Right cardiac atrium (tissue), 5 donors: ENCODE measurements at regions of chr2 and their contacts with region 1.

Region 1: GRCh38 chr2:46812361-46813024 is 103.1 kb downstream of the MCFD2 start:
- DNase-seq: peak; percentile 82 to 93 (median 91)
- ATAC-seq: peak; percentile 45 to 55
- H3K4me3 ChIP-seq: no peak overlapping the region
- H3K27ac ChIP-seq: peak overlapping the region; percentile 81
- H3K4me1 ChIP-seq: peaks cover 41% of the 10 kb centered on the region
- H3K27me3 ChIP-seq: no peaks in the 10 kb centered on the region

Region 2: DNA sequence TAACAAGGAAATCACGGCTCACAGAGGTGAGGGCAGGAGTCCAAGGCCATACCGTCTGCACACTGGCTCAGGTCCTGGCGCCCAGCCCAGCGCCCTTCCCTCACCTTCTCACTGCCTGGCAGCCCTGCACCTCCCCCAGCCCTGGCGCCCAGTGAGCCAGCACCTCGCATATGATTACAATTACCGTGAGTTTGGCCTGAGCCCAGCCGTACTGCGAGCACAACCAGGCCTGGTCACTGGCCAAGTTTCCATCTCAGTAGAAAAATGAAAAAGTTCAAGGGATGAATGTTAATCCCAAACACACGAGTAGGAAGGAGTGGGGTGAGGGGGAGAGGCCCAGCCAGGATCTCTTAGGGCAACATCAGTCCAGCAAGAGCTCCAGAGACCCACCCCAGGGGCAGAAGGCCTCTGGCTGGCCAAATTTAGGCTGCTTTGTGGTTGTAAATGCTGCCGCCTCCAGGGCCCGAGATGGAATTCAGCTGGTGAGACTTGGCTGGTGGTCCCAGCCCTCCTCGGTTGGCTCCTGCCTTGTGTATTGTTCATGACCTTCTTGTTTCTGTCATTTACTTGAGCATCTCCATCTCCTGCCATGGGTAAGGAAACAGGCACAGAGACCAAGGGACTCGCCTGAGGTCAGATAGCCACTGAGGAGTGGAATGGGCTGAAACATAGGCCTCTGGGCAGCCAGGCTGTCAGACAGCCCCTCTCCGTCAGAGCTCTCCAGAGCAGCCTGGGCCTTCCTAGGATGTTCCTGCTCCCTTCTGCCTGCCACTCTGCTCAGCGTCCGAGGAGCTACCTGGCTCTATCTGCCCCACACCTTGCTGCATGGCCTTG is 35.0 kb after region 1 on chr2:
- intact Hi-C with region 1: loop called in 1 of 4 experiments (anchors 5 kb)
- DNase-seq: peak; percentile 93 to 96 (median 96)
- ATAC-seq: peak; percentile 81 to 82
- H3K4me3 ChIP-seq: no peak overlapping the region
- H3K27ac ChIP-seq: peak overlapping the region; percentile 97
- H3K4me1 ChIP-seq: peaks cover 44% of the 10 kb centered on the region
- H3K27me3 ChIP-seq: no peaks in the 10 kb centered on the region